ENCODE measurements at regions of chr10 and their contacts with region 1.

Region 1: GRCh38 chr10:72297968-72298773 is 24.4 kb downstream of the DDIT4 start:
- DNase-seq: peak; percentile 99 to 100 (median 99)
- H3K4me3 ChIP-seq: peak overlapping the region; percentile 30 to 69 (median 62)
- H3K4me3 Mint-ChIP-seq: peak overlapping the region; percentile 67 to 82
- H3K27ac ChIP-seq: peak overlapping the region; percentile 100
- H3K27ac Mint-ChIP-seq: peak overlapping the region; percentile 97 to 100 (median 99)
- H3K4me1 ChIP-seq: peaks cover 29 to 33% of the 10 kb centered on the region in 2 donors
- H3K4me1 Mint-ChIP-seq: peaks cover 40% of the 10 kb centered on the region
- H3K27me3 ChIP-seq: no peaks in the 10 kb centered on the region
- H3K27me3 Mint-ChIP-seq: peaks cover 0 to 3% (median 0%) of the 10 kb centered on the region in 3 donors
- CTCF ChIP-seq: no peak

Region 2: DNA sequence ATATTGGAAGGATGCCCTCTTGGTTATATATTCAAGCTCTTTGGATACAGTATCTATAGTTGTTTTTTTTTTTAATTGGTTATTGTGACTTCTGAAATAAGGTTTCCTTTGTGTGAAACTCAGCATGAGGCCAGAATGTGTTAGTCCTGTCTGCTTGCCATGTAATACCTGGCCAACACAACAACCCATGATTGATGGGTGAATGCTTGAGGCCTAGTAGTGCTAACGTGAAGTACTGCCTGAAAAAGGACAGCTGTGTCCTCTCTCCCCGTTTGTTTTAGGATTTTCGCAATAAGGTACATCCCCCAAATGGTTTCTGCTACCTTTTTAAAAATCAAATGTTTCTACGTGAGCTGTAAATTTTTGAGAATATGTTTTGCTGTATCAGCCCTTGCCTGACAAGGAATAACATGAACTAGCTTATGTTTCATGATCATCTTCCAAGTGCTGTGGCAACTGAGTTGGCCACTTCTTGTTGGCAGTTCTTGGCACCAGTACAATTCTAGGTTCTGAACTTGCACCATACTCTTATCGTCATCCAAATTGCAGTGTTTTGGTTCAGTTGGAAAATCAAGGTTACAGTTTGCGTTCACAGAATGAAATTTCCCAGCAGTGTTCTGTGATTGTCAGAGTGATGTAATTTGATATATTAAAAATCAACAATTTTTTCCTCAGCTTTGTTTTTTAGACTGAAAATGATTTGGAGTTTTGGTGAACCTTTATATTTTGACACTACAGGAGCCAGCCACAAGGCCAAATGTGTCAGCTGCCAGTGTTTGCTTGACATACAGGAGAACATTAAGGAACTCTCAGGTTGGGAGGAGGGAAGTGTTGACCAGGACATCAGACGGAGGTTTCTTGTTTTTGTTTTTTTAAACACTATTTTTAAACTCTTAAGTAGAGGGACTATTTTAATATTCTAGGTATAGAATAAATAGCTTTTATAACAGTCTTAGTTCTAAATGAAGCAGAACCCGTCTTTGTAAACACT is 68.6 kb before region 1 on chr10:
- intact Hi-C with region 1: loop called in 1 of 2 experiments (anchors 10 kb)
- DNase-seq: peak in 2 of 3 donors; percentile 25 to 51
- H3K4me3 ChIP-seq: no peak overlapping the region
- H3K4me3 Mint-ChIP-seq: no peak overlapping the region
- H3K27ac ChIP-seq: peak overlapping the region in 1 of 2 donors; percentile 6
- H3K27ac Mint-ChIP-seq: peak overlapping the region in 6 of 7 donors; percentile 31 to 84 (median 54)
- H3K4me1 ChIP-seq: peaks cover 13 to 22% of the 10 kb centered on the region in 2 donors
- H3K4me1 Mint-ChIP-seq: peaks cover 18% of the 10 kb centered on the region
- H3K27me3 ChIP-seq: no peaks in the 10 kb centered on the region
- H3K27me3 Mint-ChIP-seq: no peaks in the 10 kb centered on the region
- CTCF ChIP-seq: no peak

Region 3: DNA sequence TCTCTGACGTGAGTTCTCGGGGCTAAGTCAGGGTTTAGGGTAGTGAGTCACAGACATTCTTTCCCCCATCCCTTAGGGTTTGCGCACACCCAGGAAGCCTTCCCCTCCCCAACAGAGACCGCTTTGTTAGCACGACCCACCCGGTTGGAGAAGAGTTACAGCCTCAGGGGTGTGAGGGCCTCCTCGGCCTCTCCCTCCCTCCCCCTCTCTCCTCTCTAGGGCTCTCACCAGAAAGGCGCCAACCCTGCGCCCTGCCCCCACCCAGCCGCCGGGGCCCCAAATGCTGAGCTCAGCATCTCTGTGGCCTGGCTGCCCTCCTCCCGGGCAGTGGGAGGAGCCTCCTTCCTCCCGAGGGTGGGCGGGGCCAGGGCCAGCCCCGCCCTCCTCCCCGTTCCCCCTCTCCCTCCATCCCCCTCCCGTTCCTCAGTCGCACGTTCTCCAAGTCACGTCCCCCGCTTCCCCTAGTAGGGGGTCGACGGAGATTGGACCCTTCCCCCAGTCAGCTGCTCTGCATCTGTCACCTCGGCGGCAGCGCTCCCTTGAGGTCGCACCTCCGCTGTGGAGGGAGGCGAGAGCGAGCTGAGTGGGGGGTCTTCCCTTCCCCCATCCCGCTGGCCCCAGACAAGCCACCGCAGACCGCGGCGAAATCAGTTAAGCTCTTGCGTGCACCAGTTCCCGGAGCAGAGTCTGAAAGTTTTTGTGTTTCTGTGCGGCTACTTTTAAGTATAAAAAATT is 37.4 kb before region 1 on chr10:
- intact Hi-C with region 1: loop called (anchors 5 kb)
- DNase-seq: peak; percentile 83 to 92 (median 85)
- H3K4me3 ChIP-seq: peak overlapping the region; percentile 63 to 79 (median 64)
- H3K4me3 Mint-ChIP-seq: peak overlapping the region; percentile 85 to 91
- H3K27ac ChIP-seq: peak overlapping the region; percentile 59 to 86
- H3K27ac Mint-ChIP-seq: peak overlapping the region; percentile 74 to 95 (median 91)
- H3K4me1 ChIP-seq: peaks cover 43 to 44% of the 10 kb centered on the region in 2 donors
- H3K4me1 Mint-ChIP-seq: peaks cover 42% of the 10 kb centered on the region
- H3K27me3 ChIP-seq: no peaks in the 10 kb centered on the region
- H3K27me3 Mint-ChIP-seq: peaks cover 0 to 3% (median 2%) of the 10 kb centered on the region in 3 donors
- CTCF ChIP-seq: no peak

Region 4: DNA sequence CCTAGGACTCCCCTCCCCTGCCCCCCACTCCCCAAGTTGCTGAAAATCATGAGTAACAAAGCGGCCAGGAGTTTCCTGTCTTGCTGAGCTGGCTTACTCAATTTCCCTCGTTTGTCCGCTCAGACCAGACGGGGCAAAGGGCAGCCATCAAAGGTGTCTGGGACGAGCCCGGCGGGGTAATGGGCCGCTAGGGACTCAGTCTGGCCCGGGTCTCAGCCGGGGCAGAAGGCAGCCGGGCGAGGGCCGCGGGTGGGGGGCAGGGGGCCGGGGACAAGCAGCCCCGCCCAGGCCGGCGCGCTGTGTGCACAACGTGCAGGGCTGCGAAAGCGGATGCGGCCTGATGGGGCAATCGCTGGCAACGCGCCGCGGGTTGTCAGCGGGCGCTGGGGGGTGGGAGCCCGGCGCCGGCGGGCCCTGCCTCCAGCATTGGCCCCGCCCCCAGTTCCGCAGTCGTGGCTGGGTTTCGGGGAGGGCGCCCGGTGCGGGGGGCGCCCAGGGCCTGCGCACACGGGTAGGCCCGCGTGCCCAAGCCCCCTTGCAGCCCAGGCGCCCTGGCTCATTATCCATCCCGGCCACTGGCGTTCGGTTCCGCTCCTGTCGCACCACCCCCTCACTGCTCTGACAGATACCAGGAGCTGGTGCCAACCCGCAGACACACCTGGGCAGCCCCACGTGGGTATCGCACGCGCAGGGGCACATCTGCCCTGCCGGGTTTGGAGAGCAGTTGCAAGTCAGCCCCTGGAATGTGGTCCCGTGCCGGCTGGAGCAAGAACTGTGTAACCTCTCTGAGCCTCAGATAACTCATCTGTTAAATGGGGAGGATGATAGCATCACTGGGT is 21.5 kb after region 1 on chr10:
- intact Hi-C with region 1: loop called (anchors 1 to 2 kb)
- DNase-seq: peak; percentile 93 to 96 (median 94)
- H3K4me3 ChIP-seq: peak overlapping the region; percentile 37 to 73 (median 47)
- H3K4me3 Mint-ChIP-seq: peak overlapping the region; percentile 73 to 79
- H3K27ac ChIP-seq: peak overlapping the region; percentile 98 to 100
- H3K27ac Mint-ChIP-seq: peak overlapping the region; percentile 97 to 100 (median 99)
- H3K4me1 ChIP-seq: peaks cover 89 to 99% of the 10 kb centered on the region in 2 donors
- H3K4me1 Mint-ChIP-seq: peaks cover 89% of the 10 kb centered on the region
- H3K27me3 ChIP-seq: no peaks in the 10 kb centered on the region
- H3K27me3 Mint-ChIP-seq: no peaks in the 10 kb centered on the region
- CTCF ChIP-seq: no peak

Region 5: DNA sequence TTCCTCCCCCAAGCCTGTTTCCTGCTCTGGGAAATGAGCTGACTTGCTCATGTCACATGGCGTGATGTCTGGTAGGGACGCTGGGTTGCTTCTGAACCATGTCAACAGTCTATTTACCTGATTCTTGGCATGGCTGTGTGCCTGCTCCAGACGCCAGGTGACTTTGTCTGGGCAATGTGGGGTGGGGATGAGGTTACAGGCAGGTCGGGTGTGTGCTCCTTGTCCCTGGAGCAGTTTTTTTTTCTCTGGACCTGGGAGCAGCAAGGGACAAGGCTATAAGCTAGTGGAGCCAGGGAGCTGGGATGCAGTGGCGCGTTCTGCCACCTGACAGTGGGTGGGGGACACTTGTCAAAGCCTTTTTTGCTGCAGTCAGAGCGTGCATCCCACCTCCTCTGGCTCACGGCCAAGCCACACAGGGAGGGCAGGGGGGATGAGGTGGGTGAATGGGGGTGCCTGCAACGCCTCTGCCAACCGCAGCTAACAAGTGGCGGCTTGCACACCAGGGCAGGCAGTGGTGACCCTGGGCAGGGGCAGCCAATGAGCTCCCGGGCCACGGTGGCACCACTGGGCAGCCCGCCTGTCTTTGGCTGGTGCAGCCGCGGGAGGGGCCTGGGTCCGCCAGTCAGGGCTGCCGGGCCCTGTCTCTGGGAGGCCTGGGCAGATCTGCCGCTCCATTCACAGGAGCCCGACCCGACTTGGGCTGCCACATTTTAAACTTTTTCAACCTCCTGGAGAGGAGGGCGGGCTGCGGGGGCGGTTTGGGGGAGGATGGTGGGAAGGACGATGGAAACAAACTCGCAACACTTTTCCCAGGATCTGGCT is 33.6 kb after region 1 on chr10:
- intact Hi-C with region 1: loop called (anchors 5 kb)
- DNase-seq: peak; percentile 90 to 93 (median 93)
- H3K4me3 ChIP-seq: peak overlapping the region in 1 of 3 experiments; percentile 67
- H3K4me3 Mint-ChIP-seq: peak overlapping the region; percentile 43 to 80
- H3K27ac ChIP-seq: peak overlapping the region; percentile 60 to 86
- H3K27ac Mint-ChIP-seq: peak overlapping the region; percentile 89 to 97 (median 95)
- H3K4me1 ChIP-seq: peaks cover 88 to 94% of the 10 kb centered on the region in 2 donors
- H3K4me1 Mint-ChIP-seq: peaks cover 91% of the 10 kb centered on the region
- H3K27me3 ChIP-seq: no peaks in the 10 kb centered on the region
- H3K27me3 Mint-ChIP-seq: peaks cover 0 to 8% (median 3%) of the 10 kb centered on the region in 3 donors
- CTCF ChIP-seq: peak; percentile 65